Transverse colon (tissue), 4 donors: ENCODE measurements at regions of chr17 and their contacts with region 1.

Region 1: DNA sequence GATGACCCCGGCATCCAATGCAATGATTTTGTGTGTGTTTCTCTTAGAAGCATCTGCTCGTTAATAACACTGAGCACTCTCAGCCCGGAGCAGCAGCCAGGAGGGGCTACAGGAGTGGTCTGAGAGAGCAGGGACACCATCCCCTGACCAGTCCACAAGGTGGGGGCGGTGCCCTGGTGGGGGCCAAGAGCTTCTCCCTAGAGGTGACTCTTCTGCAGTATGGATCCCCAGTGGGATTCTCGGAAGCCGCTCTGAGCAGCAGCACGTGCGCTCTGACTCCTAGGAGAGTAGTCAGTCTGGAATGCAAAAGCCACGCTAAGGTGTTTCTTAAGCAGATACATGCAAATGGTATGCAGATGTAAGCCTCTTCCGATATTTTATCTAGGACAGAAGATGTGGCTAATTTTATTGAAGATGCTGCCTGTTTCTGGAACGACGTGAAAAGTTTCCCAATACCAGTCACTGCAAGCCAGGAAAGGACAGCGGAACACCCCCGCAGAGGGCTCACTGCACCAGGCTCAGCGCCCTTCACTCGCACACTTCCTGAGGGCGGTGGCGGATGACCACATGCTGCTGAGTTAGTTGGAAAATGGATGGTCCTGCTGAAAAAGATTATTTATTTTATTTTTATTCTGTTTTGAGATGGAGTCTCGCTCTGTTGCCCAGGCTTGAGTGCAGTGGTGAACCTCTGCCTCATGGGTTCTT is 10.2 kb downstream of the FADS6 start:
- DNase-seq: no peak
- H3K4me3 ChIP-seq: no peak overlapping the region
- H3K27ac ChIP-seq: no peak overlapping the region
- H3K4me1 ChIP-seq: peaks cover 3 to 5% (median 4%) of the 10 kb centered on the region in 4 donors
- H3K27me3 ChIP-seq: peaks cover 22% of the 10 kb centered on the region
- CTCF ChIP-seq: no peak
- EP300 ChIP-seq: no peak
- POLR2A ChIP-seq: no peak

Region 2: GRCh38 chr17:73838815-73839214 is 1044.4 kb before region 1 on chr17:
- in situ Hi-C with region 1: no loop called
- intact Hi-C with region 1: loop called (anchors 5 kb)
- DNase-seq: no peak
- H3K4me3 ChIP-seq: no peak overlapping the region
- H3K27ac ChIP-seq: no peak overlapping the region
- H3K4me1 ChIP-seq: peaks cover 0 to 7% (median 0%) of the 10 kb centered on the region in 4 donors
- H3K27me3 ChIP-seq: peaks cover 27% of the 10 kb centered on the region
- CTCF ChIP-seq: no peak
- EP300 ChIP-seq: no peak
- POLR2A ChIP-seq: no peak

Region 3: DNA sequence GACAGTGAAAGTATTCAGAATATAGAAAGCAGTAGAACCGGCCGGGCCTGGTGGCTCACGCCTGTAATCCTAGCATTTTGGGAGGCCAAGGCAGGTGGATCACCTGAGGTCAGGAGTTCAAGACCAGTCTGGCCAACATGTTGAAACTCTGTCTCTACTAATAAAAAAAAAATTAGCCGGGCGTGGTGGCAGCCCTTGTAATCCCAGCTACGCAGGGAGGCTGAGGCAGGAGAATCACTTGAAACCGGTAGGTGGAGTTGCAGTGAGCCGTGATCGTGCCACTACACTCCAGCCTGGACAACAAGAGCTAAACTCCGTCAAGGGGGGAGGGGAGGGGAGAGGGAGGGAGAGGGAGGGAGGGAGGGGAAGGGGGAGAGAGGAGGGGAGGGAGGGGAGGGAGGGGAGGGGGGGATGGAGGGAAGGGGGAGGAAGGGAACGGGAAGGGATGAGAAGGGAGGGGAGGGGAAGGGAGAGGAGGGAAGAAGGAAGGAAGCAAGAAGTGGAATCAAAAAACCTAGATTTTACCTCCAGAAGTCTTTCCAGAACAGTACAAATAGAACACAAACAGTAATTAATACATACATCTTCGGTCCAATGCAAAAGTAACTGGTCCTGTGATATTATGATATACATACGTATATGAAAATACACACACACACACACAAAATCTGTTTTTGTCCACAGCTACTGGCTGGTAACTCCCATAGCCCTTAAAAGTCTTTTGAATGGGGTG is 259.2 kb after region 1 on chr17:
- in situ Hi-C with region 1: no loop called
- intact Hi-C with region 1: no loop called
- DNase-seq: no peak
- H3K4me3 ChIP-seq: no peak overlapping the region
- H3K27ac ChIP-seq: no peak overlapping the region
- H3K4me1 ChIP-seq: peaks cover 0 to 1% (median under 1%) of the 10 kb centered on the region in 4 donors
- H3K27me3 ChIP-seq: no peaks in the 10 kb centered on the region
- CTCF ChIP-seq: no peak
- EP300 ChIP-seq: no peak
- POLR2A ChIP-seq: no peak